Vagina (tissue), 2 donors: ENCODE measurements at regions of chr1 and their contacts with region 1.

Region 1: GRCh38 chr1:75677443-75677842 is 47.1 kb upstream of the ACADM start:
- DNase-seq: no peak
- H3K4me3 ChIP-seq: no peak overlapping the region
- H3K27ac ChIP-seq: no peak overlapping the region
- H3K4me1 ChIP-seq: no peaks in the 10 kb centered on the region
- H3K27me3 ChIP-seq: no peaks in the 10 kb centered on the region
- CTCF ChIP-seq: no peak
- POLR2A ChIP-seq: no peak

Region 2: DNA sequence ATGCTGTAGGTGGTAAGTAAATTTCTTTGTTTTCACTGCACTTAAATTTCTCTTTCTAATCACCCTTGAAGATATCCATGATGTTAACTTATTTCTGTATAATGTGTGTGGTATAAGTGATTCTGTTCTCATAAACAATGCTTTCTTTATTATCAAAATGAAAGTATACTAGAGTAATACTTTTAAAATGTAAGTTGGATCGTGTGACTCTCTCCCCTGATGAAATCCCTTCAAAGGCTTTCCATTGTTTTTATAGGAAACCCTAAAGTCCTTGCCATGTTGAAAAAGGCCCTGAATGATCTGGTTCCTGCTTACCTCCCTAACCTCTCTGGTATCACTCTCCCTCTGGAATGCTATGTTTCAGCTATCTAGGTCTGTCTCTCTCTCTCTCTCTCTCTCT is 734.4 kb before region 1 on chr1:
- intact Hi-C with region 1: loop called (anchors 10 kb)
- DNase-seq: no peak
- H3K4me3 ChIP-seq: no peak overlapping the region
- H3K27ac ChIP-seq: no peak overlapping the region
- H3K4me1 ChIP-seq: no peaks in the 10 kb centered on the region
- H3K27me3 ChIP-seq: no peaks in the 10 kb centered on the region
- CTCF ChIP-seq: no peak
- POLR2A ChIP-seq: no peak

Region 3: GRCh38 chr1:75582725-75583261 is 94.7 kb before region 1 on chr1:
- intact Hi-C with region 1: no loop called
- DNase-seq: no peak
- H3K4me3 ChIP-seq: no peak overlapping the region
- H3K27ac ChIP-seq: no peak overlapping the region
- H3K4me1 ChIP-seq: no peaks in the 10 kb centered on the region
- H3K27me3 ChIP-seq: no peaks in the 10 kb centered on the region
- CTCF ChIP-seq: no peak
- POLR2A ChIP-seq: no peak